Endothelial cell of umbilical vein (primary cell): ENCODE measurements at regions of chr1 and their contacts with region 1.

Region 1: DNA sequence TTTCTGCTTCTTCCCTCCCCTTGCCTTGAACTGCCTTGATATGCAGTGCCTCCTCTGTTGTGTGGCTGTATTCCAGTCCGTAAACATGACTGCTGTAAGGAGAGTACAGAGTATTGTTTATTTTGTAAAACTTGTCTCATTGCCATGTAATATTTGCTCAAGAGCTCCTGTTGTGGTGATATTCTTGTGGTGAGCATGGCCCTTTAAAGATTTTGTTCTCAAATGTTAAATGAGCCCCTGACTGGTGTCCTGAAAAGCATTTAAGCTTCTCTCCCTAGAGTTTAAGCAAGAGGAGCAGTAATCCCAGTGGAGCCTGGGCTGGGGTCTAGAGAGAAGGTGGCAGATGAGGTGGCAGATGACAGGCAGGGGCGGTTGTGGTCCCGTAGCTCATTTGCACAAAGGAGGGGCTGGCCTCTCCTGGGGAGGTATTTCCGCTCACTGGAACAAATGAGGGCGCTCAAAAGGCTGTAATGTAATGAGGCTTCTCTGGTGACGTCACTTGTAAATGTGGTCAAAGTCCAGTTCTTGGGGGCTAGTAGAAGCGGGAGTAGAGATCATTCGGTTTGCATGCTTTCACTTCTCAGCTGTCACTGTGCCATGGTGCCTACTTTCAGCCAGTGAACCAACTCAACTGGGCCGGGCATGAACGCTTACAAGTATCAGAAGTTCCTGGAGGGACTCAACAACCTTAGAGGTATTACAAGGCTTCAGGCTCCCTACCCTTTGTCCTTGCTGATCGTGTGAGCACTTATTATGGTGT is 46.0 kb upstream of the MACF1 start:
- DNase-seq: no peak
- H3K4me3 ChIP-seq: no peak overlapping the region
- H3K27ac ChIP-seq: peak overlapping the region; percentile 80
- H3K4me1 ChIP-seq: peaks cover 64% of the 10 kb centered on the region
- H3K27me3 ChIP-seq: no peaks in the 10 kb centered on the region
- CTCF ChIP-seq: no peak
- POLR2A ChIP-seq: no peak

Region 2: GRCh38 chr1:38990738-38991639 is 167.5 kb before region 1 on chr1 and contains the start of gene AKIRIN1:
- CTCF ChIA-PET with region 1: no interaction called
- POLR2A ChIA-PET with region 1: no interaction called
- dilution Hi-C with region 1: no loop called
- intact Hi-C with region 1: no loop called
- DNase-seq: peak; percentile 97
- H3K4me3 ChIP-seq: peak within 1 kb of the TSS; percentile 67 to 83 (median 82)
- H3K27ac ChIP-seq: peak within 1 kb of the TSS; percentile 85
- H3K4me1 ChIP-seq: peaks cover 27% of the 10 kb centered on the region
- H3K27me3 ChIP-seq: no peaks in the 10 kb centered on the region
- CTCF ChIP-seq: no peak
- POLR2A ChIP-seq: peak; percentile 95
- total RNA-seq, gene AKIRIN1: 43.4 and 49.3 TPM in 2 replicates

Region 3: DNA sequence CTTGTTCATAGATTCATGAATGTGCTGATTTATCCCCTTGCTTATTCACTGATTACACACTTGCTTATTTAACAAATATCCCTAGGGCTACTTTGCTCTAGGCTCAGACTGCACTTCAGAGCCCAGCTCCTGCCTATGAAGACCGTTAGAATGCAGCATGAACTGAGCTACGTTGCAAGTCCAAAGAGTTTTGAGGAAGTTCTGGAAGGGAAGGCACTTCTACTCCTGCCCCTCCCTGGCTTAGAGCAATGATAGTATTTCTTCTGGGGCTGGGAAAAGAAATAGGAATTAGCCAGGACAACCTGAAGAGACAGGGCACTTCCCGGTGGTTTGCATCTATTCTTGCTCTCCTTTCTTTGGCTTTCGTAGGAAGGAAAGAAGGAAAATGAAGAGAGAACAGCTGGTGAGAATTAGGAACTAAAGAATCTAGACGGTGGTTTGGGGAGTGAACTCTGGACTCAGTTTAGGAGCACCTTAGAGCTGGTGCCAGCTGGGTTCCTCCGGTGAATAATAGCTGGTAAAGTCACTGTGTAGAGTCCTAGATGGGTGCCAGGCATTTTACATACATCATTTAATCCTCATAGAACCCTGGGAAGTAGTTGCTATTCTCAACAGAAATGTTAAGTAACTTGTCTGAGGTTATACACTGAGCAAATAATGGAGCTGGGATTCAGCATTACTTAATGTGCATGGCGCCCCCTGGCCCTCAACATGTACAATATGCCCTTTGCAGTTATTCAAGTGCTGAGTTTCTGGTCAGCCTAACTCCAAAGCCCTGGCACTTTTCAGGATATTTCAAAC is 66.5 kb before region 1 on chr1:
- CTCF ChIA-PET with region 1: no interaction called
- POLR2A ChIA-PET with region 1: no interaction called
- dilution Hi-C with region 1: no loop called
- intact Hi-C with region 1: no loop called
- DNase-seq: peak; percentile 76
- H3K4me3 ChIP-seq: no peak overlapping the region
- H3K27ac ChIP-seq: no peak overlapping the region
- H3K4me1 ChIP-seq: no peaks in the 10 kb centered on the region
- H3K27me3 ChIP-seq: no peaks in the 10 kb centered on the region
- CTCF ChIP-seq: peak; percentile 64
- POLR2A ChIP-seq: no peak

Region 4: GRCh38 chr1:39183503-39184353 is 25.2 kb after region 1 on chr1:
- CTCF ChIA-PET with region 1: interaction called, 7 read pairs
- POLR2A ChIA-PET with region 1: no interaction called
- dilution Hi-C with region 1: no loop called
- intact Hi-C with region 1: loop called (anchors 2 kb)
- DNase-seq: peak; percentile 91
- H3K4me3 ChIP-seq: no peak overlapping the region
- H3K27ac ChIP-seq: peak overlapping the region; percentile 95
- H3K4me1 ChIP-seq: peaks cover 70% of the 10 kb centered on the region
- H3K27me3 ChIP-seq: no peaks in the 10 kb centered on the region
- CTCF ChIP-seq: peak; percentile 48 to 50
- POLR2A ChIP-seq: peak; percentile 16

Region 5: GRCh38 chr1:39258146-39258924 is 99.8 kb after region 1 on chr1:
- CTCF ChIA-PET with region 1: no interaction called
- POLR2A ChIA-PET with region 1: no interaction called
- dilution Hi-C with region 1: no loop called
- intact Hi-C with region 1: no loop called
- DNase-seq: peak; percentile 75
- H3K4me3 ChIP-seq: no peak overlapping the region
- H3K27ac ChIP-seq: no peak overlapping the region
- H3K4me1 ChIP-seq: no peaks in the 10 kb centered on the region
- H3K27me3 ChIP-seq: no peaks in the 10 kb centered on the region
- CTCF ChIP-seq: peak; percentile 70 to 71
- POLR2A ChIP-seq: no peak